ENCODE measurements at regions of chr5 and their contacts with region 1.

Region 1: GRCh38 chr5:39283231-39283818 is 64.0 kb upstream of the FYB1 start:
- DNase-seq: peak; percentile 47
- CTCF ChIP-seq: peak; percentile 65

Region 2: DNA sequence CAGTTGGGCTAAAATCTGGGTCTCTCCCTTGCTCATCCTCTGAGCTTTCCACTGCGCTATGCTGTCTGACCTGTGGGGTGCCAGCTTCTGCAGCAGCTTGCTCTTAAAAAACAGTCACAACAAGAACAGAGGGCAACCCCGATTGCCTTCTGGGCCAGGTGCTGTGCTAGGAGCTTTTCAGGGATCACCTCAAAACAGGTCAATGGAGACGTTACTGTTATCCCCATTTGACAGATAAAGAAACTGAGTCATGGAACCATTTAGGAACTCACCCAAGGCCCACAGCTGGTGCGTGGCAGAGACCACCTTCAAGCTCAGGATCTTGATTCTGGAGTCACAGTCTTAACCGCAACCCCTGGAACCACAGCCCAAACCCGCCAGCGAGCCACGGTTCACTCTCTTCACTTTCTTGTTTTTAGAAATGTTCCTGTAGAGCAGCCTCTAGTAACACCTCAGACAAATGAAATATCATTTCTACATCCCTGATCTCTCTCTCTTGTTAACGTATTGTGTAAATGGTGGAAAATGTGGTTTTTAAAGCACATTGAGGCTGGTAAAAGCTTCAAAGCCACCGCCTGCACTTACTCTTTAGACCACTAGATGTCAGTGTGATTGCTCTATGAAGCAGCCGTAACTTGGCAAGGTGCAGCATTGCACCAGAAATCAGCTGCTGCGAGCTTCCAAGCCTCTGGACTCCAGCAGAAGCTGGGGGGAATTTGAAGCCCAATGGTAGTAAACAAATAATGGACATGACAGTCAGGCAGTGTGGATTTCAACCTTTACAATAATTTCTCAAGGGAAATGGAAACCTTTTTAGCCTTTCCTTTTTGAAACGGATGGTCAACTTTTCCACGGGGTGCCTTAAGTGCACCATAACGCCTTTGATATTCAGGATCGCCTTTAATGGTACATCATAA is 65.7 kb before region 1 on chr5:
- in situ Hi-C with region 1: loop called (anchors 10 kb)
- DNase-seq: peak; percentile 59
- CTCF ChIP-seq: peak; percentile 91